ENCODE measurements at regions of chr11 and their contacts with region 1.

Region 1: GRCh38 chr11:46537537-46538295 is 56.1 kb downstream of the AMBRA1 start:
- DNase-seq: peak; percentile 33 to 71
- ATAC-seq: peak in 7 of 8 donors; percentile 67 to 85 (median 72)
- H3K4me3 ChIP-seq: no peak overlapping the region
- H3K27ac ChIP-seq: no peak overlapping the region
- H3K4me1 ChIP-seq: peaks cover 2 to 38% (median 12%) of the 10 kb centered on the region in 9 donors
- H3K27me3 ChIP-seq: no peaks in the 10 kb centered on the region
- CTCF ChIP-seq: peak; percentile 79 to 97 (median 90)

Region 2: DNA sequence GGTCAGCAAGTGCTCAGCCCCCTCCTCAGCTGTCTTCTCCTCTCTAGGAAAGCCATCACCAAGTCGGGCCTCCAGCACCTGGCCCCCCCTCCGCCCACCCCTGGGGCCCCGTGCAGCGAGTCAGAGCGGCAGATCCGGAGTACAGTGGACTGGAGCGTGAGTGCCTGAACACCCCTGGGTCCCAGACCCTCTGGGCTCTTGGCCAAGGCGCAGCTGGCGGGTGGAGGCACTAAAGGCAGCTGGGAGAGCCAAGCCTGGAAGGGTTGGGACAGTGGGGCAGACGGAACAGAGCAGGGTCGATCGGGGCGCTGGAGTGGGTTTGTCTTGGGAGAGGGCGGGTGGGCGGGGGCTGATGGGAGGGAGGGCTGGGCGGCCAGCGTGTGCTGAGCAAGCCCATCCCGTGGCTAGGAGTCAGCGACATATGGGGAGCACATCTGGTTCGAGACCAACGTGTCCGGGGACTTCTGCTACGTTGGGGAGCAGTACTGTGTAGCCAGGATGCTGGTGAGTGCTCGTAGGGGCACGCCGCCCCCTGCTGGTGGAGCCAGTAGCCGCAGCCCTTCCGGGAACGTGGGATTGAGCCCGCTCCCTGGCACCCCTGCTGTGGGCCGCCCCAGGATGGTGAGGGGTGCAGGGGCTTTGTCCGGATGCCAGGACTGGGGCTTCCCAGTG is 170.3 kb before region 1 on chr11:
- intact Hi-C with region 1: no loop called
- DNase-seq: peak; percentile 71 to 81
- ATAC-seq: peak; percentile 34 to 67 (median 56)
- H3K4me3 ChIP-seq: no peak overlapping the region
- H3K27ac ChIP-seq: peak overlapping the region in 7 of 10 donors; percentile 17 to 56 (median 38)
- H3K4me1 ChIP-seq: peaks cover 14 to 57% (median 44%) of the 10 kb centered on the region in 9 donors
- H3K27me3 ChIP-seq: no peaks in the 10 kb centered on the region
- CTCF ChIP-seq: peak; percentile 84 to 95 (median 92)

Region 3: DNA sequence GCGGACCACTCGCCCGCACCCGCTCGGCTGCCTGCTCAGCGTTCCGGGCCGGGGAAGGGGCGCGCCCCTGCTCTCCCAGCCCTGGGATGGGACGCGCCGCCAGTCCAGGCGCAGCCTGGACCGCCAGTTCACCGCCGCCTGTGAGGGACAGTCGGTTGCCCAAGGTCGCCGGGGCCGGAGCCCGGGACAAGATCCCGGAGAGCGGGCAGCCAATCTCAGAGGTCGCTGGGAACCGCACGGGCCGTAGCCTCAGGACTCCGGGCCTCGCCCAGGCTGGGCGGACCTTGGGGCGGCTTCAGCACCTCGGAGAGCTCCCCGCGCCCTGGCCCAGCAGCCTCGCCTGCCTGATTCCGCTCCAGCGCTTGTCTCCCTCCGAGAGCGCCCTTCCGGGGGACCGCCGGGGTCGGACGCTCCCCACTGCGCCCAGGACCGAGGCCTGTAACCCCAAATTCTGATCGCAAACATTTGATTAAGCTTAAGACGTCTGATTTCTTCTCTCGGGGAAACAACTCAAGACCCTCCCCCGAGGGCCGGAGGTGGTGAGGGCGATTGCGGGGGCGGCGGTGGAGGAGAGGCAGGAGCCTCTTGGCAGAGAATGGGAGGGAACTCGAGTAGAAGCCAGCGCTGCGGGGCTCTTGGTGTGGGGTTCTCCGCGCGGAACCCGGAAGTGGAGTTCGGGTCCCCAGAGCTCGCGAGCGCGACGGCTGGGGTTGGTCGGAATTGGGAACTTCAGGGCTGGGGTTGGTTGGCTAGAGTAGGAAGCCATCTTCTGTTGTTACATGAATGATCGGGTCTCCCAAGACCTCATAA is 145.1 kb before region 1 on chr11:
- intact Hi-C with region 1: loop called in 7 of 10 experiments (anchors 1 to 5 kb)
- DNase-seq: peak; percentile 84 to 91
- ATAC-seq: peak; percentile 88 to 94 (median 92)
- H3K4me3 ChIP-seq: peak overlapping the region; percentile 25 to 54 (median 48)
- H3K27ac ChIP-seq: no peak overlapping the region
- H3K4me1 ChIP-seq: peaks cover 19 to 49% (median 34%) of the 10 kb centered on the region in 9 donors
- H3K27me3 ChIP-seq: peaks cover 21 to 55% (median 45%) of the 10 kb centered on the region in 7 donors
- CTCF ChIP-seq: peak in 1 of 9 donors; percentile 13

Region 4: GRCh38 chr11:46438211-46438610 is 99.5 kb before region 1 on chr11:
- intact Hi-C with region 1: loop called in 1 of 10 experiments (anchors 5 kb)
- DNase-seq: no peak
- ATAC-seq: no peak
- H3K4me3 ChIP-seq: no peak overlapping the region
- H3K27ac ChIP-seq: no peak overlapping the region
- H3K4me1 ChIP-seq: peaks cover 0 to 41% (median 13%) of the 10 kb centered on the region in 9 donors
- H3K27me3 ChIP-seq: no peaks in the 10 kb centered on the region
- CTCF ChIP-seq: no peak

Region 5: GRCh38 chr11:46472670-46472994 is 65.1 kb before region 1 on chr11:
- intact Hi-C with region 1: no loop called
- DNase-seq: no peak
- ATAC-seq: peak in 7 of 8 donors; percentile 25 to 98 (median 85)
- H3K4me3 ChIP-seq: no peak overlapping the region
- H3K27ac ChIP-seq: peak overlapping the region in 1 of 10 donors; percentile 3
- H3K4me1 ChIP-seq: peaks cover 4 to 23% (median 16%) of the 10 kb centered on the region in 9 donors
- H3K27me3 ChIP-seq: no peaks in the 10 kb centered on the region
- CTCF ChIP-seq: no peak

Region 6: GRCh38 chr11:46489661-46490560 is 47.8 kb before region 1 on chr11:
- intact Hi-C with region 1: loop called in 3 of 10 experiments (anchors 2 to 10 kb)
- DNase-seq: no peak
- ATAC-seq: peak in 5 of 8 donors; percentile 34 to 59 (median 51)
- H3K4me3 ChIP-seq: no peak overlapping the region
- H3K27ac ChIP-seq: no peak overlapping the region
- H3K4me1 ChIP-seq: peaks cover 0 to 50% (median 36%) of the 10 kb centered on the region in 9 donors
- H3K27me3 ChIP-seq: no peaks in the 10 kb centered on the region
- CTCF ChIP-seq: peak in 8 of 9 donors; percentile 18 to 67 (median 59)

Measured in heart right ventricle (tissue), 16 donors.